ENCODE measurements at regions of chr3 and their contacts with region 1.

Region 1: DNA sequence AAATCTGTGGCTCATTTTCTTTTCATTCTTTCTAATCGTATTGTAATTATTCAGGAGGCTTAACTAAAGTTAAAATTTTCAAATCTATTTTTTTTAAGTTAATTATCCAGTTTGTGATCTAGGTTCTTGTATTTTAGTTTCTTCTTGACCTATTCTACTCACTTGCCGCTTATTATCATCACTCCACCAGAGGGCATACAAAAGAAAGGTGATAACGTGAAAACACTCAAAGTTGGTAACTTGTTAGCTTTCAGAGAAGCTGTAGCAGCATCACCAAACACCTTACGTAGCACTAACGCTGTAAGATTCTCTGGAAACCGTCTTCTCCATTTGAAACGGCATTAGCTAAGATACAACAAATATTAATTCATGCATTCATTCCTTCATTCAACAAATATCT is 4.8 kb downstream of the GNB4 start:
- DNase-seq: no peak
- H3K4me3 ChIP-seq: no peak overlapping the region
- H3K27ac ChIP-seq: no peak overlapping the region
- H3K4me1 ChIP-seq: no peaks in the 10 kb centered on the region
- H3K27me3 ChIP-seq: no peaks in the 10 kb centered on the region
- CTCF ChIP-seq: no peak

Region 2: DNA sequence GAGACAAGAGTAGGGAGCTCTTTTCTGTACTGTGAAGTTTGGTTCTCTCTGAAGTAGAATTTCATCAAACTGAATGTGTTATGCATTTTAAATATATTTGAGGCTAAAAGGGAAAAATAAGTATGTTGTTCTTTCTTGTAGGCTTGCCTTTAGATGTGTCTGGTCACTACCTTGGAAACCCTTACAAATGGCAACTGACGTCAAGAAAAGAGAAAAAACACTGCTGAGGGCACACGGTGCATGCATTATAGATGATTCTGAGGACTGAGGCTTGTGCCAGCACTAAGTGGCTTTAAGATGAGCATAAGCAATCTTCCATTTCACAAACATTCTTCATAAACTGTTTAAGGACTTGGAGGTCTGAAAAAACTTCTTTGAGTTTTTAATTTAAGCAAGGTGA is 85.1 kb after region 1 on chr3:
- intact Hi-C with region 1: loop called (anchors 10 kb)
- DNase-seq: no peak
- H3K4me3 ChIP-seq: no peak overlapping the region
- H3K27ac ChIP-seq: no peak overlapping the region
- H3K4me1 ChIP-seq: no peaks in the 10 kb centered on the region
- H3K27me3 ChIP-seq: no peaks in the 10 kb centered on the region
- CTCF ChIP-seq: no peak

Region 3: GRCh38 chr3:179562591-179563270 is 116.2 kb after region 1 on chr3 and contains the start of gene ACTL6A:
- intact Hi-C with region 1: loop called (anchors 5 kb)
- DNase-seq: peak; percentile 100
- H3K4me3 ChIP-seq: peak within 1 kb of the TSS; percentile 91
- H3K27ac ChIP-seq: peak within 1 kb of the TSS; percentile 85
- H3K4me1 ChIP-seq: peaks cover 7% of the 10 kb centered on the region
- H3K27me3 ChIP-seq: no peaks in the 10 kb centered on the region
- CTCF ChIP-seq: no peak
- total RNA-seq, gene ACTL6A: 37.2 to 49.7 TPM

Measured in colonic mucosa (tissue), 4 donors.